Esophagus muscularis mucosa (tissue), 4 donors: ENCODE measurements at regions of chr12 and their contacts with region 1.

Region 1: GRCh38 chr12:62435303-62436163 is 31.1 kb upstream of the MON2 start:
- DNase-seq: no peak
- H3K4me3 ChIP-seq: peak overlapping the region; percentile 41 to 59 (median 50)
- H3K27ac ChIP-seq: no peak overlapping the region
- H3K4me1 ChIP-seq: peaks cover 11 to 18% (median 15%) of the 10 kb centered on the region in 4 donors
- H3K27me3 ChIP-seq: peaks cover 0 to 33% (median 4%) of the 10 kb centered on the region in 4 donors
- CTCF ChIP-seq: peak; percentile 20 to 46 (median 25)
- EP300 ChIP-seq: no peak
- POLR2A ChIP-seq: no peak

Region 2: DNA sequence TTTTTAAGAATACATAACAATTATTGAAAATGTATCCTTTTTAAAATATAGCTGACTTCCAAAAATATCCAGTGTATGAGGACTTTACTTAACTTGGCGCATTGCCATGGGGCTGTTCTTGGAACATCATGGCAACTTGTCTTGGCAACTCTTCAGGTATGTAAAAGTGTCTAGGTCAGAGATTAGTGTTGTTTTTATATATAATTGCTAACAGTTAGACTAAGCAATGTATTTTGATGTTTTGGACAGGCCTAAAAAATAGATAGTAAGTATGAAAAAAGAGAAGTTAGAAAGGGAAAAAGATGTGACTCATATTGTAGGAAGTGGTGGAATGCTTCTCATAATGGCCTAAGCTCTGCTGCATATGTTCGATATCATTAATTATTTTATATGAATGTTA is 102.0 kb after region 1 on chr12:
- intact Hi-C with region 1: loop called (anchors 5 kb)
- DNase-seq: no peak
- H3K4me3 ChIP-seq: no peak overlapping the region
- H3K27ac ChIP-seq: peak overlapping the region in 1 of 4 donors; percentile 12
- H3K4me1 ChIP-seq: peaks cover 3 to 13% (median 12%) of the 10 kb centered on the region in 4 donors
- H3K27me3 ChIP-seq: no peaks in the 10 kb centered on the region
- CTCF ChIP-seq: no peak
- EP300 ChIP-seq: no peak
- POLR2A ChIP-seq: no peak

Region 3: DNA sequence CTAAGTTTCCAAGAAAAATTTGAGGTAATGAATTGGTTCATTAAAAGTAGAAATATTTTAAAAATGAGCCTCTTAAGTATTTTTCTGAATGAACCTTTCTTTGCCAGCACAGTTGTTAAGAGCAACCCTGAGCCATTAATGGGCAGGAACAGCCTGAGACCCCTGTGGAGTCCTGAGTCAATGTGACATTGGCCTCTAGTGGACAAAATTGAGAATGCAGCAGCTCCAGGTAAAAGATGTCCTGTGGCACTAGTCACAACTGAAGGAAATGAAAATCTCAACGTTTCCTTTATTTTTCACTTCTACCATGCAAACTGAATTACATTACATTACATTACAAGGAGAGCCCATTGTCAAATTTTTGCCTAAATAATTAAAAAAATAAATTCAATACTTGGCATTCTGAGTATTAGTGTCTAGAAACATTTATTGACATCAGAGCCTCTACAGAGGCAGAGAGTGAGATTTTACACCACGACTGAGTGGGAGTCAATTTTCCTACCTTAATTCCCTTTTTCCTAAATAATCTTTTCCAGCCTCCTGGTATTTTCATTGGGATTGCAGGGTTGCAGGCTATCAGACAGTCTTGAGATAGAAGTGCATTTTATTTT is 363.7 kb after region 1 on chr12:
- intact Hi-C with region 1: loop called (anchors 5 kb)
- DNase-seq: no peak
- H3K4me3 ChIP-seq: no peak overlapping the region
- H3K27ac ChIP-seq: no peak overlapping the region
- H3K4me1 ChIP-seq: peaks cover 0 to 3% (median 2%) of the 10 kb centered on the region in 4 donors
- H3K27me3 ChIP-seq: no peaks in the 10 kb centered on the region
- CTCF ChIP-seq: peak in 2 of 3 experiments; percentile 88 to 92
- EP300 ChIP-seq: no peak
- POLR2A ChIP-seq: no peak